ENCODE measurements at regions of chr6 and their contacts with region 1.

Region 1: GRCh38 chr6:162032620-162033019 is 694.9 kb downstream of the PRKN start:
- DNase-seq: no peak
- H3K4me3 Mint-ChIP-seq: no peak overlapping the region
- H3K27ac Mint-ChIP-seq: peak overlapping the region; percentile 87
- H3K4me1 Mint-ChIP-seq: peaks cover 35% of the 10 kb centered on the region
- H3K27me3 Mint-ChIP-seq: no peaks in the 10 kb centered on the region

Region 2: DNA sequence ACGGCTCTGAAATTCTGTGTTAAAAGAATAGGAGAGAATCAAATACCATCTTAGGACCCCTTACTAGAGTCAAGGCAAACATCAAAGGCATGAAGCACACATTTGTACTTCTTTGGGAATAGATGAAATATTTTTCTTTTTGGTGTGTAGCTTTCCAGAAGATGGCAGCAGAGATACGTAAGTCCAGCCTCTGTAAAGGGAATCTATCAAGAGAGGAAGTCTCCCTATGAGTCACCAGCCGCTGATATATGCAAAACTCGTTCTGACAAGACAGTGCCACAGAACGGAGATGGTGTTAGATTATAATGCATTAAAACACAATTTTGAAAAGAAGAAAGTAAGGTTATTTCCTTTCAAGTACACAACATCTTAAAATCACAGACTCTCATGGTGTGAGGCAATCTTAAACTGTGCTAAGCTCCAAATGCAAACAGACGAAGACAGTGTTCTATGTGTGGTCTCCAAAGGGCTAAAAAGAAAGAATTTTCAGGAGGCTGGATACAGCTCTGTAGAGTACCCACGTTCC is 638.7 kb before region 1 on chr6:
- intact Hi-C with region 1: loop called (anchors 2 kb)
- DNase-seq: peak; percentile 48
- H3K4me3 Mint-ChIP-seq: no peak overlapping the region
- H3K27ac Mint-ChIP-seq: no peak overlapping the region
- H3K4me1 Mint-ChIP-seq: no peaks in the 10 kb centered on the region
- H3K27me3 Mint-ChIP-seq: peaks cover 39% of the 10 kb centered on the region

Region 3: GRCh38 chr6:162068340-162068739 is 35.7 kb after region 1 on chr6:
- intact Hi-C with region 1: no loop called
- DNase-seq: no peak
- H3K4me3 Mint-ChIP-seq: no peak overlapping the region
- H3K27ac Mint-ChIP-seq: no peak overlapping the region
- H3K4me1 Mint-ChIP-seq: no peaks in the 10 kb centered on the region
- H3K27me3 Mint-ChIP-seq: no peaks in the 10 kb centered on the region

Region 4: GRCh38 chr6:162109480-162110050 is 76.9 kb after region 1 on chr6:
- intact Hi-C with region 1: loop called (anchors 1 kb)
- DNase-seq: no peak
- H3K4me3 Mint-ChIP-seq: no peak overlapping the region
- H3K27ac Mint-ChIP-seq: no peak overlapping the region
- H3K4me1 Mint-ChIP-seq: peaks cover 12% of the 10 kb centered on the region
- H3K27me3 Mint-ChIP-seq: no peaks in the 10 kb centered on the region

Region 5: DNA sequence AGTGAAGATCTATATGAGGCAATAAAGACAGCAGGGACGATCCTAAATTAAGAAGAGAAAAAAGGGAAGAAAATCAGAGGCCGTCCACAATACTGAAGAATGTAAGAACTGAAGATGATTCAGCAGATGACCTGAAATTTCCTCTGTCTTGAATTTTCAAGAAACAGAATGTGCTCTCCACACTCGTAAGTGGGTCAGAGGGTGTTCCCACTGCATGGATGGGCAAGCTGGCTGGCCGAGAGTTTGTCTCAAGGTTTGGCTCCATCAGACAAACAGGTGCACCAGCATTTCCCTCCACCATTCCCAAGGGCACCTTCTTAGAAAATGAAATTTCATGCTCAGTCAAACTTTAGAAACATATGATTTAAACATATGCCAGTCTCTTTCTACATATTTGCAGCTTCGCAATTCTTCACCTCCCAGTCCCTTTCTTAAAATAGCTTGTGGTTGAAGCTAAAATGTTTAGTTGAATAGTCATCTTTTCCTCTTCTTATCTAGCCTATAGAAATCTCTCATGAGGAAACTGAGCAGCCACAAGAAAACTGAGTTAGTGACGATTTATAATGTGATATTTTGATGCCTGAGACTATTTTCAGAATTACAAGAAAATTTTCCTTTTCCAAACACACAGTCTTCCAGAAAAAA is 118.5 kb after region 1 on chr6:
- intact Hi-C with region 1: loop called (anchors 2 kb)
- DNase-seq: no peak
- H3K4me3 Mint-ChIP-seq: no peak overlapping the region
- H3K27ac Mint-ChIP-seq: no peak overlapping the region
- H3K4me1 Mint-ChIP-seq: peaks cover 21% of the 10 kb centered on the region
- H3K27me3 Mint-ChIP-seq: no peaks in the 10 kb centered on the region

Region 6: DNA sequence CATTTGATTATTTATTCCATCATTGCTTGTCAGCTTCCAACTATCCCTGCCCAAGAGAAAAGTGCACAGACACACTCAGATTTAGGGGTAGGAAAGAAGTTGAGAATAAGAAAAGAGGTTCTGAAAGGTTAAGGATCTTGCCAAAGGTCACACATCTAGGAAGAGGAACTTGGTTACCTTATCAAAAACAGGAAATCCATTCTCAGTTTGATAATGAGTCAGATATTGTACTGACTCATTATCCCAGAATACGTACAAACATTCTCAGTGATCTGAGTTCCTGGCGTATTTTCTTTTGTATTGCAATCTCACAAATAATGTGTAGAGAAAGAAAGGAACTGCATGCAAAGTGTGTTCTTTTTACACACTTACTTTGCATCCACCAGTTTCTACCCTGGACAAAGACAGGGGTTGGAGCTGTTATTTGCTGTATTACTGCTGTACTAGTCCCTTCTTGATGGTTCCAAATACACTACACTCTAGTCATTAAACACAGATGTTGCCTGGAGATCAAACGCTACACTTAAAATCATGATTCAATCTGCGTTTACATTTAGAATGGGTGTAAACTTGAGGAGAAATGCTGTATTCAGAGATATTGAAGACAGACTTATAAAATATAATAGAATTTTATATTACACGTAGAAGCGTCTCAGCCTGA is 149.3 kb after region 1 on chr6:
- intact Hi-C with region 1: loop called (anchors 1 kb)
- DNase-seq: no peak
- H3K4me3 Mint-ChIP-seq: no peak overlapping the region
- H3K27ac Mint-ChIP-seq: no peak overlapping the region
- H3K4me1 Mint-ChIP-seq: peaks cover 19% of the 10 kb centered on the region
- H3K27me3 Mint-ChIP-seq: no peaks in the 10 kb centered on the region